ENCODE measurements at regions of chr4 and their contacts with region 1.

Region 1: DNA sequence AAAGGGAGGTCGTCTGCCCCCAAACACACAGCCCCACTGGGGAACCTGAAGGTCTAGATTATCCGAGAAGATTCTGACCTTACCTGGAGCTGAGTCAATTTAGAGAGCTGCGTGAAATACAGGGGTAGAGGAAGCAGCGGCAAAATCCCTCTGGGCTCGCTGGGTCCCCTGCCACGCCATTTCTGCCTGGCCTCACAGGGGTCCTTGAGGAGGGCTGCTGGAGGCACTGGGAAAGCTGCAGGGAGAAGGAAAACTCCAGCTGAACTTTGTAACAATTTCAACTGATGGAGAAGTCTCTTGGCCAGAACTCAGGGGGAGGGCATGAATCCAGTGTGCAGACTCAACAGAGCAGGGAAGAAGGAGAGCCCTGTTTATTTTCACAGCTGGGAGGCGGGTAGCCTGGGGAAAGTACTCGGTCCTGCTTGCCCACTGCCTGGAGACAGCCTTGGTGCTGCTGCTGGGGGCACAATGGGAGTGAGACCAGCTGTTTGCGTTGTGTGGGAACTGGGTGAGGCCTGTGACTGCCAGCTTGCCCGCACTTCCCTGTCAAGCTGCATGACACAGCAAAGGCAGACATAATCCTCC is 93.2 kb upstream of the MAPK10 start:
- DNase-seq: peak; percentile 37
- H3K4me3 ChIP-seq: peak overlapping the region; percentile 30
- H3K27ac ChIP-seq: peak overlapping the region; percentile 60 to 67
- H3K4me1 ChIP-seq: no peaks in the 10 kb centered on the region
- H3K27me3 ChIP-seq: no peaks in the 10 kb centered on the region
- CTCF ChIP-seq: no peak
- POLR2A ChIP-seq: no peak

Region 2: DNA sequence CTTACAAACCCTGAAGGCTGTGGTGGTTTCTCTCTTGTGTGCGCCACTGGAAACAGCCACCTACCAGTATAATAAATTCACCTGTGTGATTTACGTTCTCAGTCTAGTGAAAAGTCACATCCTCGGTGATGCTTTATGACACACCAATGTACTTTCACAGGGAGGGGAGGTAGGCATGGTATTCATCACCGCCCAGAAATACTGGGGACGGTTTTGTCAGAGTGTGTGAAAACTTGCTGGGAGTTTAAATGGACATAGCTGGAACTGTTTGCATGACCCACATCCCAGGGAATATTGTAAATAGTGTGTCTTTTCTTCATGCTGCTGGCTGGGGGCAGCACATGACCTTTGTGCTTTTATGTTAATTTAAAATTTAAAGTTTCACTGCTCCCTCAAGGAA is 515.0 kb before region 1 on chr4:
- intact Hi-C with region 1: no loop called
- DNase-seq: no peak
- H3K4me3 ChIP-seq: no peak overlapping the region
- H3K27ac ChIP-seq: no peak overlapping the region
- H3K4me1 ChIP-seq: no peaks in the 10 kb centered on the region
- H3K27me3 ChIP-seq: no peaks in the 10 kb centered on the region
- CTCF ChIP-seq: no peak
- POLR2A ChIP-seq: no peak

Region 3: DNA sequence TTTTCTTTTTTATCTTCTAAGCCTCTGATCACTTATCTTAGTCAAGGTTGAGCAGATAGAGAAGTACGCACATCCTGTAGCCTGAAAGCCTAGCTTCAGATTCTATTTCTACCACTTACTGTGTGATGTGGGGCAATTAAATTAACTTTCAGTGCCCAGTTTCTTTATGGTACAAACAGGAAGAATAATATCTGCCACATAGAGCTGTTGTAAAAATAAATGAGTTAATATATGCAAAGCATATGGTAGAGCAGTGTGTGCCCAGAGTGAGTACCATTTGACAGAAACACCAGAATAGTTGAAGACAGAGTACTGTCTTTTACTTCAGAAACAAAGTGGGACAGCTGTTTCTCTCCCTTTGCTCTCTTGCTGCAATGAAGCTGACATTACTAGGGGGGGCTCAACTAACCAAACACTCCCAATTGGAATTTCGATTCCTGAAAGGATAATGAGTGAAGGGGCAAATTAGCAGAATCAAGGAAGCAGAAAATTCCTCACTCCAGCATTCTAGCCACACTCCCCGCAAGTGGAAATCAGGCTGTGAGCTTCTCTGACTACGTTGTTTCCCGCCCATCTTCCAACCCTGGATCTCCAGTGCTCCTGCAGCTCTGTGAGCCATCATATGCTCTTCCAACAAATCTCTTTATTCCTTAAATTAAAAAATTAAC is 173.6 kb before region 1 on chr4:
- intact Hi-C with region 1: loop called (anchors 10 kb)
- DNase-seq: no peak
- H3K4me3 ChIP-seq: no peak overlapping the region
- H3K27ac ChIP-seq: no peak overlapping the region
- H3K4me1 ChIP-seq: no peaks in the 10 kb centered on the region
- H3K27me3 ChIP-seq: no peaks in the 10 kb centered on the region
- CTCF ChIP-seq: no peak
- POLR2A ChIP-seq: no peak

Region 4: GRCh38 chr4:86376850-86377249 is 76.2 kb before region 1 on chr4:
- intact Hi-C with region 1: no loop called
- DNase-seq: no peak
- H3K4me3 ChIP-seq: no peak overlapping the region
- H3K27ac ChIP-seq: no peak overlapping the region
- H3K4me1 ChIP-seq: no peaks in the 10 kb centered on the region
- H3K27me3 ChIP-seq: no peaks in the 10 kb centered on the region
- CTCF ChIP-seq: no peak
- POLR2A ChIP-seq: no peak

Region 5: GRCh38 chr4:86386817-86387415 is 66.1 kb before region 1 on chr4:
- intact Hi-C with region 1: no loop called
- DNase-seq: no peak
- H3K4me3 ChIP-seq: no peak overlapping the region
- H3K27ac ChIP-seq: no peak overlapping the region
- H3K4me1 ChIP-seq: peaks cover 5% of the 10 kb centered on the region
- H3K27me3 ChIP-seq: no peaks in the 10 kb centered on the region
- CTCF ChIP-seq: no peak
- POLR2A ChIP-seq: no peak

Region 6: GRCh38 chr4:87707279-87707918 is 1254.4 kb after region 1 on chr4:
- intact Hi-C with region 1: no loop called
- DNase-seq: no peak
- H3K4me3 ChIP-seq: no peak overlapping the region
- H3K27ac ChIP-seq: no peak overlapping the region
- H3K4me1 ChIP-seq: no peaks in the 10 kb centered on the region
- H3K27me3 ChIP-seq: no peaks in the 10 kb centered on the region
- CTCF ChIP-seq: no peak
- POLR2A ChIP-seq: no peak